ENCODE measurements at regions of chr12 and their contacts with region 1.

Region 1: DNA sequence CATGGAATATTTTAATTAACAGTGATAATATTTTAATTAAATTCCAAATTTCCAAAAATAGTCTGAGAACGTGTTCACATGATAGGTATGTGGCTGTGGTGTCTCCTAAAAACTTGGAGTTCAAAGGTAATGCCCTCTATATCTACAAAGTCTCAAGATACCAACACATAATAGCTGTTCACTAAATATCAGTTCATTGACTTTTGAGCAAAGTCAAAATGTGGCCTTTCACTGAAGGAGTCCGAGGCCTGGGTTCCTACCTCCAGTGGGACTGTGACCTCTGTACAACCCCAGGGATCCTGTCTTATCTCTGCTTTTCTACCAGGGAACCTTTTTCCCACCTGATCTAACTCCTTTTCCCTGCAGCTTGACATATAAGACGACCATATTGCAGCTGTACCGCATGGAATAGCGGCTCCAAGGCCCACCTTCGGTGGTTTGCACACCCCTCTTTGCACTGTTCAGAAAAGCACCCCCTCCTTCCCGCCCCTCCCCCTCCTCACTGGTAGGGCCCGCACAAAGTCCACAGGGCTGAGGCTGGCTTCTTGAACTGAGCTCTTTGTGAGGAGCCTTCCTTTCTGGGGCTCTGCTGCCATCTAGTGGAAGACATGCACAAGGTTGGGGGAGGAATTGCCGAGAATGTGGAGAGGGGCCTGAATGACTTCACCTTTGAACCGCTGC is 3.1 kb downstream of the CCND2 start:
- DNase-seq: peak; percentile 67
- ATAC-seq: peak; percentile 92
- H3K4me3 ChIP-seq: no peak overlapping the region
- H3K27ac ChIP-seq: no peak overlapping the region
- H3K4me1 ChIP-seq: peaks cover 5 to 13% of the 10 kb centered on the region in 2 experiments; a peak in 3 of 4 replicates
- H3K27me3 ChIP-seq: peaks cover 28% of the 10 kb centered on the region
- CTCF ChIP-seq: peak; percentile 65 to 92 (median 88); a peak in 5 of 6 replicates
- POLR2A ChIP-seq: no peak
- RAD21 ChIP-seq: peak; percentile 89

Region 2: DNA sequence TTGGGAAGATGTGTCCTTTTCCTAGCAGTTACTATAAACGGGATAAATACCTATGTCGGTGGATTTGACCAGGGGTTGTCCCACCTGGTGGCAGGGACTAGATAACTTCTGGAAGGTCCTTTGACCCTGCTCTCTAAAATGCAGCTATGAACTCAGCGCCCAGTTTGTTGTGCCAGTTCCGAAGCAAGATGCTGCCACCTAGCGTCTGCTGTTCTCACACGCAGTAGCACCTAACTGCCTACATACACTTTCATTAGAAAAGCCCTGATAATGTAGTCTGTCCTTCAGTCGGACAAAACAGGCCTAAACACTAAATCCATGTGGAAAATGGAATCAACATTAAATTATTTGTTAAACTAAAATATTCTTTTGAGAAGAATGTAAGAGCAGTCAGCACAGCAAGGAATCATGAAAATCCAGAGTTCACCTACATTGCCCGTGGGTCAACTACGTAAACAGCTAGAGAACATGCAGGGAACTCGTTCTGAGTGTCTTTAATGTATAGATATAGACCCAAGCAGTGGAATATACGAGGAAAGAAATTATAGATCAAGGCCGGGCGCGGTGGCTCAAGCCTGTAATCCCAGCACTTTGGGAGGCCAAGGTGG is 472.7 kb before region 1 on chr12:
- CTCF ChIA-PET with region 1: interaction called, 13 read pairs
- POLR2A ChIA-PET with region 1: no interaction called
- RAD21 ChIA-PET with region 1: no interaction called
- intact Hi-C with region 1: loop called (anchors 10 kb)
- DNase-seq: peak; percentile 64
- ATAC-seq: peak; percentile 98
- H3K4me3 ChIP-seq: no peak overlapping the region
- H3K27ac ChIP-seq: no peak overlapping the region
- H3K4me1 ChIP-seq: no peaks in the 10 kb centered on the region
- H3K27me3 ChIP-seq: peaks cover 22% of the 10 kb centered on the region
- CTCF ChIP-seq: peak; percentile 74 to 95 (median 93)
- POLR2A ChIP-seq: no peak
- RAD21 ChIP-seq: peak; percentile 86

Region 3: GRCh38 chr12:3990501-3991280 is 286.0 kb before region 1 on chr12:
- CTCF ChIA-PET with region 1: interaction called, 21 read pairs
- POLR2A ChIA-PET with region 1: no interaction called
- RAD21 ChIA-PET with region 1: interaction called in 1 of 2 experiments, 4 read pairs
- intact Hi-C with region 1: loop called (anchors 1 kb)
- DNase-seq: no peak
- ATAC-seq: no peak
- H3K4me3 ChIP-seq: no peak overlapping the region
- H3K27ac ChIP-seq: no peak overlapping the region
- H3K4me1 ChIP-seq: no peaks in the 10 kb centered on the region
- H3K27me3 ChIP-seq: peaks cover 53% of the 10 kb centered on the region
- CTCF ChIP-seq: no peak
- POLR2A ChIP-seq: no peak
- RAD21 ChIP-seq: no peak

Region 4: DNA sequence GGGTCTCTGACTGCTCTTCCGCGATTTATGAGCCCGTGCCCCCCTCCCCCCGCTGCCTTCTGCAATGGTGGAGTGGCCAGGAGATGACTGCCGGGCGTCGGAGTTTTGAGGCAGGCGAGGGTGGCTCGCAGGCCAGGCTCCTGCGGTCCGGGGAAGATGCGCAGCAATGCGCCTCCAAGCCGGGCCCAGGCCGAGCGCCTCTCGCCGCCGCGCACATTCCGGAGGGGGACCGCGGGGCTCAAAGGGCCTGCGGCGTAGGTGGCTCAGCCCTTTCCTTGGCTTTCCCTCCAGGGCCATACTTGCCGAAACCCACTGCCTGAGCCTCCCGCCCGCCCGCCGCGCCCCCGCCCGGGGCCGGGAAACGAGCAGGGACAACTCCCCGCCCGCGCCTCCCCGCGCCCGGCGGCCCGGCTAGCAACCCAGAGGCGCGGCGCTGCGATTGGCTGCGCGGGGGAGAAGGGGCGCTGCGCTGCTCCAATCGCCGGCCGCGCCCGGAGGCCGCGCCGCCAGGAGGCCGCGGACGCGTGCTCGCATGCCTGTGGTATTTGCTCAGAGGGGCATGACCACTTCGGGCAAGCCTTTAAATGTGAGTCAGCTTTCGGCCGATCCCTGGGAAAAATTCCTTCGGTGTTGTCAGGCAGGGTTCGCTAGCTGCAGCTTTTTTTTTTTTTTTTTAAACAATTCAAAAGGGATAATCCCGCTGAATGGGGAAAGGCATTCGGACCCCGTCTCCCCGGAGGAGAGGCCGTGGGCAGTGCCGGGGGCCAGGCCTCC is 245.5 kb before region 1 on chr12:
- CTCF ChIA-PET with region 1: interaction called, 25 read pairs
- POLR2A ChIA-PET with region 1: no interaction called
- RAD21 ChIA-PET with region 1: interaction called, 4 to 5 read pairs
- intact Hi-C with region 1: loop called (anchors 5 kb)
- DNase-seq: peak; percentile 86
- ATAC-seq: peak; percentile 99
- H3K4me3 ChIP-seq: peak overlapping the region; percentile 11 to 35
- H3K27ac ChIP-seq: no peak overlapping the region
- H3K4me1 ChIP-seq: peaks cover 6 to 20% of the 10 kb centered on the region in 2 experiments
- H3K27me3 ChIP-seq: peaks cover 47% of the 10 kb centered on the region
- CTCF ChIP-seq: no peak
- POLR2A ChIP-seq: no peak
- RAD21 ChIP-seq: no peak

Region 5: GRCh38 chr12:4107436-4107878 is 169.2 kb before region 1 on chr12:
- CTCF ChIA-PET with region 1: interaction called, 26 read pairs
- POLR2A ChIA-PET with region 1: no interaction called
- RAD21 ChIA-PET with region 1: no interaction called
- intact Hi-C with region 1: loop called (anchors 1 kb)
- DNase-seq: peak; percentile 26
- ATAC-seq: peak; percentile 97
- H3K4me3 ChIP-seq: no peak overlapping the region
- H3K27ac ChIP-seq: no peak overlapping the region
- H3K4me1 ChIP-seq: no peaks in the 10 kb centered on the region
- H3K27me3 ChIP-seq: peaks cover 39% of the 10 kb centered on the region
- CTCF ChIP-seq: peak; percentile 49 to 74 (median 71); a peak in 5 of 6 replicates
- POLR2A ChIP-seq: no peak
- RAD21 ChIP-seq: peak; percentile 51

Region 6: GRCh38 chr12:4210183-4210582 is 66.5 kb before region 1 on chr12:
- CTCF ChIA-PET with region 1: no interaction called
- POLR2A ChIA-PET with region 1: no interaction called
- RAD21 ChIA-PET with region 1: no interaction called
- intact Hi-C with region 1: no loop called
- DNase-seq: no peak
- ATAC-seq: no peak
- H3K4me3 ChIP-seq: no peak overlapping the region
- H3K27ac ChIP-seq: no peak overlapping the region
- H3K4me1 ChIP-seq: no peaks in the 10 kb centered on the region
- H3K27me3 ChIP-seq: peaks cover 61% of the 10 kb centered on the region
- CTCF ChIP-seq: no peak
- POLR2A ChIP-seq: no peak
- RAD21 ChIP-seq: no peak

Region 7: GRCh38 chr12:4221258-4221620 is 55.4 kb before region 1 on chr12:
- CTCF ChIA-PET with region 1: no interaction called
- POLR2A ChIA-PET with region 1: no interaction called
- RAD21 ChIA-PET with region 1: no interaction called
- intact Hi-C with region 1: no loop called
- DNase-seq: no peak
- ATAC-seq: no peak
- H3K4me3 ChIP-seq: no peak overlapping the region
- H3K27ac ChIP-seq: no peak overlapping the region
- H3K4me1 ChIP-seq: no peaks in the 10 kb centered on the region
- H3K27me3 ChIP-seq: peaks cover 82% of the 10 kb centered on the region
- CTCF ChIP-seq: no peak
- POLR2A ChIP-seq: no peak
- RAD21 ChIP-seq: no peak

Measured in HCT116 (cell line).